Activated CD8-positive, alpha-beta T cell treated with anti-CD3 and anti-CD28 coated beads, Interleukin-2, amount 10 ng/mL, durations not matched to agents 7 days and 5 days (primary cell): ENCODE measurements at regions of chr3 and their contacts with region 1.

Region 1: DNA sequence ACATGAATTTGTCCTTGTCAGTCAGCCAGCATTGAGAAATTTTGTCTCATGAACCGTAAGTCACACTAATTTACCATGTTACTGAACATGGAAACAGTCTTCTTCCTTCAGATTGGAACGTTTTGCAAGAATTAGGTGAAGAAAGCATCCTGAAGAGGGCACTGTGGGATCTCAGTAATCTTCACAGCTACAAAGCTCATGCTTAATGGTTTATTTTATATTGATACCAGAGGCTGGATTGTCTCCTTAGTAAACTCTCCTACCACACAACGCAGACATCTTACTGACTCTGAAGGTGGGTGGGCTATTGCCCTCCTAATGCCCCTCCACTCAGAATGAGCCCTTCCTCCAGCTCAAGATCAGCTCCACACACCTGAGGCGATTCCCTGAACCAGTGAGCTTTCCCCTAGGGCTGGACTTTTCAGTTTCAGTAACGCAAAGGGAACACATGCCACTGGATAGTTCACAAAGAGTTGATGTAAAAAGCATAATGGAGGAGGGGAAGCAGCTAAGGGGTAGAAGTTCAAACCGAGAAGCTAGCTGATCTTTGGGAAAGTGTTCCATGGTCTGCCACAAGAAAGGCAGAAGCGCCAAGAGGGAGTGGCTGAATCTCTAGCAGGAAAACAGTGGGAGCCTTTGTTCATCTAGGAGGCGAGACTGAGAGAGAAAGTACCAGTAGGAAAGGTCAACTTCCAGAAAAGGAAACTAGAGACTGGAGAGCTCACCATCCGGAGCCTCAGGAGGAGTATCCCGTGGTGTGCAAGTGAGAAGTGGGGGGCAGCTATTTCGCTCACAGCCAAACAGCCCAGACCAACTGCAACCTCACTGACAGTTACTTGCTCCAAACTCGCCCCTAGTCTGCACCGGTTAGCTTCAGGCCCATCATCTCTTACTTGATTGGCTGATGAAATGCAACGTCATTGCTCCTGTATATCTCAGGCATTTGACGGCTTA is at the start of gene SLC9C1:
- DNase-seq: peak; percentile 68
- ATAC-seq: peak; percentile 74
- H3K4me3 Mint-ChIP-seq: peak within 1 kb of the TSS; percentile 30
- H3K27ac Mint-ChIP-seq: peak within 1 kb of the TSS; percentile 62
- H3K4me1 Mint-ChIP-seq: peaks cover 22% of the 10 kb centered on the region
- H3K27me3 Mint-ChIP-seq: peaks cover 2% of the 10 kb centered on the region
- total RNA-seq, gene SLC9C1: not detected

Region 2: DNA sequence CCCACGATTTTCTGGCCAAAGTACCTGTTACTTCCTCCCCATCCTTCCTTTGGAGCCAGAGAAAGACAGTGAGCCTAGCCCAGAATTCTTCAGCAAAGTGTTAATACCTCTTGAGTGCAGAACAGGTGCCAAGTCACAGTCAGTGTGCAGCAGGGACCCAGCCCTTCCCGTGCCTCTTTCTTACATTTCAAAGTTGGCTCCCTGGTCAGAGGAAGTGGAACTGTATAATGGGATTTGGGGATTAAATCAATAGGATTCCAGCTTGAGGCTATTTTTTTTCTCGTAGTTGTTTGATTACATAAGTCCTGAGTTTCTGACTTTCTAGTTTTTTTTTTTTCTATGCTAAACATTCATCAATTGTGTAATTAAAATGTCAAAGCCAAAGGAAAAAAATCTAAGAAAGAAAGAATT is 367.4 kb before region 1 on chr3:
- CTCF ChIA-PET with region 1: no interaction called
- POLR2A ChIA-PET with region 1: no interaction called
- DNase-seq: no peak
- ATAC-seq: no peak
- H3K4me3 Mint-ChIP-seq: no peak overlapping the region
- H3K27ac Mint-ChIP-seq: no peak overlapping the region
- H3K4me1 Mint-ChIP-seq: no peaks in the 10 kb centered on the region
- H3K27me3 Mint-ChIP-seq: no peaks in the 10 kb centered on the region

Region 3: GRCh38 chr3:112303764-112304325 is 10.2 kb after region 1 on chr3:
- CTCF ChIA-PET with region 1: interaction called, 55 read pairs
- POLR2A ChIA-PET with region 1: no interaction called
- DNase-seq: no peak
- ATAC-seq: peak; percentile 57
- H3K4me3 Mint-ChIP-seq: no peak overlapping the region
- H3K27ac Mint-ChIP-seq: no peak overlapping the region
- H3K4me1 Mint-ChIP-seq: peaks cover 1% of the 10 kb centered on the region
- H3K27me3 Mint-ChIP-seq: no peaks in the 10 kb centered on the region

Region 4: GRCh38 chr3:112327371-112327951 is 33.8 kb after region 1 on chr3:
- CTCF ChIA-PET with region 1: interaction called, 40 read pairs
- POLR2A ChIA-PET with region 1: no interaction called
- DNase-seq: peak; percentile 70
- ATAC-seq: peak; percentile 99
- H3K4me3 Mint-ChIP-seq: no peak overlapping the region
- H3K27ac Mint-ChIP-seq: no peak overlapping the region
- H3K4me1 Mint-ChIP-seq: peaks cover 4% of the 10 kb centered on the region
- H3K27me3 Mint-ChIP-seq: peaks cover 8% of the 10 kb centered on the region

Region 5: DNA sequence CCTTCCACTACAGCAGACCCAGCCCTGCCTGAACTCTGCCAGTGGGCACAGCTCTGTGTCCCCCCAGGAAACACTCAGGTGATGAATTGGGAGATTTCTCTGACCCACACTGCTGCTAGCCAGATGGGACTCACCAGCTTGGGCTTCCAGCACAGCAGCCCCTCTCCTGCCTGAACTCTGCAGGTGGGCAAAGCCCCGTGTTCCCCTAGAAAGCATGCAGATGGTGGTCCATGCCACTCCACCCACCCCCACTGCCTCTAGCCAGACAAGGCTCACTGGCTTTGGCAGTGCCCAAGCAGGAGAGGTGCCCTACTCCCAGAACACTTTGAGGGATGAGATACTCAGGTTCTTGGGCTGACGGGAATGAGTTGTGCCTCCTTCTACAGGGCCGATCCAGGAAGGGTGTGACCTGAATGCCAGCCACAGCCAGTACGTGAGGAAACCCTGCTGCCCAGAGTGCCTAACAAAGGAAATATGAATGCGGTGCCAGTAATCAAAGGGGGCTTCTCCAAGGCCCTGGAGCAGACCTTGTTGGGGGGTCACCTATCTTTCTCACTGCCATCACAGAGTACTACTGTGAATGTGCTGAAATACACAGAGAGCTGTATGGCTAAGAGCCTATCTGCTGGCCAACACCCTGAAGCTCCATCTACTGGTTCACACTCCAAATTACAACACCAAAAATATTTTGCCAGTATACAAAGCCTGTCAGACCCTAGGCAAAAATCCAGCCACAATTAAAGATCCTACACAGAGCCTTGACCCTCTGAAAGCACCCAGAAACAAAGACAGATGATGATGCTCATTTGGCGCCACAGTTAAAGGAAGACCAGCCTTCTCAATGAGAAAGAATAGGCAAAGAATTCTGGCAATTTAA is 143.7 kb after region 1 on chr3:
- CTCF ChIA-PET with region 1: interaction called, 20 read pairs
- POLR2A ChIA-PET with region 1: no interaction called
- DNase-seq: peak; percentile 29
- ATAC-seq: peak; percentile 90
- H3K4me3 Mint-ChIP-seq: no peak overlapping the region
- H3K27ac Mint-ChIP-seq: peak overlapping the region; percentile 47
- H3K4me1 Mint-ChIP-seq: peaks cover 18% of the 10 kb centered on the region
- H3K27me3 Mint-ChIP-seq: no peaks in the 10 kb centered on the region

Region 6: GRCh38 chr3:112531358-112531781 is 237.7 kb after region 1 on chr3:
- CTCF ChIA-PET with region 1: interaction called, 27 read pairs
- POLR2A ChIA-PET with region 1: no interaction called
- DNase-seq: no peak
- ATAC-seq: no peak
- H3K4me3 Mint-ChIP-seq: no peak overlapping the region
- H3K27ac Mint-ChIP-seq: no peak overlapping the region
- H3K4me1 Mint-ChIP-seq: no peaks in the 10 kb centered on the region
- H3K27me3 Mint-ChIP-seq: no peaks in the 10 kb centered on the region